ENCODE measurements at regions of chr19 and their contacts with region 1.

Region 1: GRCh38 chr19:11798391-11799330 is at the start of gene ZNF491:
- DNase-seq: peak; percentile 96
- total RNA-seq, gene ZNF491: 1.8 TPM

Region 2: GRCh38 chr19:11558881-11559828 is 239.5 kb before region 1 on chr19 and contains the start of gene ELOF1:
- intact Hi-C with region 1: no loop called
- DNase-seq: peak; percentile 99
- total RNA-seq, gene ELOF1: 32.1 TPM

Region 3: GRCh38 chr19:11657307-11657706 is 141.4 kb before region 1 on chr19:
- intact Hi-C with region 1: no loop called
- DNase-seq: no peak

Region 4: GRCh38 chr19:11814029-11814699 is 15.5 kb after region 1 on chr19 and contains the start of gene ZNF440:
- intact Hi-C with region 1: loop called (anchors 2 kb)
- DNase-seq: peak; percentile 98
- total RNA-seq, gene ZNF440: 5.4 TPM

Region 5: GRCh38 chr19:11881151-11881800 is 82.6 kb after region 1 on chr19:
- intact Hi-C with region 1: loop called (anchors 5 kb)
- DNase-seq: peak; percentile 75